ENCODE measurements at regions of chr15 and their contacts with region 1.

Region 1: GRCh38 chr15:26580943-26581342 is 191.9 kb downstream of the GABRB3 start:
- DNase-seq: no peak
- ATAC-seq: no peak

Region 2: DNA sequence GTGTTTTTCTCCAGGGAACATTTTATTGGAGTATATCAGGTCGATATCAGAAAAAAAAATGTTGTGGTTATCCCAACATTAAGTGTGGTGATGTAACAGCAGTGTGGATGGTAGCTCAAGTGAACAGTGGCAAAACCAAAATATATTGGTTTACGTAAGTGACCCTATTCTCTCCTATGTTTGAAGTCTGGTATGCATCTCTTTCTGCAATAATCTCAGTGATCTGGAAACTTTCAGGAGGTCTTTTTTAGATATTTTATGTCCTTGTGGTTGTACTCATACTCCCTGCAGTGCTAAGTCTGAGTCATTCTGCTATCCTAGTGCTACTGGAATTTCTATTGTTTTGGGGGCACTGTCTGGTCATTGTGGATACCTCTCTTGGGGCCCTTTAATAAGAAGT is 1488.3 kb before region 1 on chr15:
- intact Hi-C with region 1: loop called (anchors 10 kb)
- DNase-seq: no peak
- ATAC-seq: no peak